ENCODE measurements at regions of chr2 and their contacts with region 1.

Region 1: GRCh38 chr2:126971481-126972278 is 73.0 kb downstream of the TEX51 start:
- DNase-seq: peak; percentile 92
- H3K4me3 ChIP-seq: peak overlapping the region; percentile 38 to 59; a peak in 3 of 4 replicates
- H3K27ac ChIP-seq: no peak overlapping the region
- H3K4me1 ChIP-seq: peaks cover 0 to 21% of the 10 kb centered on the region in 2 experiments; a peak in 1 of 4 replicates
- H3K27me3 ChIP-seq: peaks cover 17% of the 10 kb centered on the region; the same call in 1 of the 2 replicates
- CTCF ChIP-seq: peak; percentile 82
- EP300 ChIP-seq: no peak
- RAD21 ChIP-seq: peak; percentile 95

Region 2: GRCh38 chr2:126776692-126777619 is 194.7 kb before region 1 on chr2:
- CTCF ChIA-PET with region 1: interaction called, 59 read pairs
- POLR2A ChIA-PET with region 1: no interaction called
- DNase-seq: peak; percentile 86
- H3K4me3 ChIP-seq: peak overlapping the region; percentile 46 to 53
- H3K27ac ChIP-seq: no peak overlapping the region
- H3K4me1 ChIP-seq: peaks cover 0 to 18% of the 10 kb centered on the region in 2 experiments; a peak in 1 of 4 replicates
- H3K27me3 ChIP-seq: no peaks in the 10 kb centered on the region
- CTCF ChIP-seq: peak; percentile 70
- EP300 ChIP-seq: no peak
- RAD21 ChIP-seq: peak; percentile 94

Region 3: GRCh38 chr2:126793885-126794613 is 177.6 kb before region 1 on chr2:
- CTCF ChIA-PET with region 1: interaction called, 80 read pairs
- POLR2A ChIA-PET with region 1: no interaction called
- DNase-seq: peak; percentile 67
- H3K4me3 ChIP-seq: no peak overlapping the region
- H3K27ac ChIP-seq: no peak overlapping the region
- H3K4me1 ChIP-seq: peaks cover 0 to 9% of the 10 kb centered on the region in 2 experiments; a peak in 1 of 4 replicates
- H3K27me3 ChIP-seq: no peaks in the 10 kb centered on the region
- CTCF ChIP-seq: no peak
- EP300 ChIP-seq: no peak
- RAD21 ChIP-seq: peak; percentile 65

Region 4: GRCh38 chr2:126858013-126858412 is 113.7 kb before region 1 on chr2:
- CTCF ChIA-PET with region 1: interaction called, 11 read pairs
- POLR2A ChIA-PET with region 1: no interaction called
- DNase-seq: peak; percentile 84
- H3K4me3 ChIP-seq: no peak overlapping the region
- H3K27ac ChIP-seq: peak overlapping the region in 1 of 2 experiments; percentile 82; a peak in 2 of 4 replicates
- H3K4me1 ChIP-seq: peaks cover 0 to 28% of the 10 kb centered on the region in 2 experiments; a peak in 2 of 4 replicates
- H3K27me3 ChIP-seq: no peaks in the 10 kb centered on the region
- CTCF ChIP-seq: no peak
- EP300 ChIP-seq: peak in 1 of 2 experiments; percentile 90; a peak in 2 of 4 replicates
- RAD21 ChIP-seq: peak; percentile 35

Region 5: DNA sequence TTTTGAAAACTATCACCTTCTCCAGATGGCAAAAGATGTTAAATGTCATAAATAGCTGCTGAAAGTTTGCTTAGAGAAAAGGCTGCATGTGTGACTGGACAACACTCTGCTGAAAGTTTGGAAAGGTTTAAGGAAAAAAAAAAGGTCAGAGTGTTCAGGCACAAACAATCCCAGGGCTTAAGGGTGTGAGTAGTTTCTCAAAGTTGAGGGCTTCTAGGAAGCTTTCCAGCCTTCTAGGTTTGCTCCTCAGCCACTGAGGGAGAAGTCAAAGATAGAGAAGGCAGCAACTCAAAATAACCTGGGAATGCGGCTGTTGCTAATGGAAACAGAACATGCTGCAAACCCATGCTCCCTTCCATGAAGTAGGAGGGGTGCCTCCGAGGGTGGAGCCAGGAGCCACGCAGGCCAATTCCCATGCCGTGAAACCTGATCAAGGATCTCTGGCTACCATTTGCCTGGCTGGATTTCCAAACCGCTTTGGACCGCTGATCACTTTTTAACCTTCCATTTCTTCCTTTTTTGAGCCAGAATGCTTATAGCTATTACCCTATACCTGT is 15.0 kb after region 1 on chr2:
- CTCF ChIA-PET with region 1: interaction called, 10 read pairs
- POLR2A ChIA-PET with region 1: no interaction called
- DNase-seq: no peak
- H3K4me3 ChIP-seq: no peak overlapping the region
- H3K27ac ChIP-seq: no peak overlapping the region
- H3K4me1 ChIP-seq: no peaks in the 10 kb centered on the region; a peak in 1 of 4 replicates
- H3K27me3 ChIP-seq: no peaks in the 10 kb centered on the region
- CTCF ChIP-seq: no peak
- EP300 ChIP-seq: no peak
- RAD21 ChIP-seq: no peak